CD8-positive, alpha-beta T cell (primary cell): ENCODE measurements at regions of chr7 and their contacts with region 1.

Region 1: DNA sequence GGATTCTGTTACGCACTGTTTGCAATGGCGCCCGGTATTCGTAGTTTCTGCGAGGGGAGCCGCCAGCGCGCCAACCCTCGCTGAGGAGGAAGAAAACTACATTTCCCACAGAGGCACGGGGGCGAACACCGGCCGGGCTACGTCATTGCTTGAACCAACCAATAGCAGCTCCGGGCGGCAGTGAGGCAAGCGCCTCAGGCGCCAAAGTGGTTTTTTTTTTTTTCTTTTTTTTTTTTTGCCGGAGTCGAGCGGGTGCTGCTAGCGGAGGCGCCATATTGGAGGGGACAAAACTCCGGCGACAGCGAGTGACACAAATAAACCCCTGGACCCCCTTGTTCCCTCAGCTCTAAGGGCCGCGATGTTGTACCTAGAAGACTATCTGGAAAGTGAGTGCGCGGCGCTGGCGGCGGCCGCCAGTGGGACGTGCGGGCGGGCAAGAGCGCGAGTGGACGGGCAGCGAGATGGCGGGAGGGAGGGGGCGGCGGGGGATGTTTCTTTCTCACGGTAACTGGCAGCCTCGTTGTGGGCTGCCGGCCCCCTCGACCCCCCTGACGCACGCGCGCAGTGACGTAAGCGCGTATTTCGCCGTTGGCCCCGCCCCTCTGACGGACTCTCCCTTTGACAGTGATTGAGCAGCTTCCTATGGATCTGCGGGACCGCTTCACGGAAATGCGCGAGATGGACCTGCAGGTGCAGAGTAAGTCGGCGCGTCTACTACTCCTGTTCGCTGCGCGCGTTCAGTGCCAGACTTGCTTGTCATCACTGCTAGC is at the start of gene ING3:
- DNase-seq: peak; percentile 97 to 99 (median 98)
- ATAC-seq: peak; percentile 85
- H3K4me3 ChIP-seq: peak within 1 kb of the TSS; percentile 63 to 93
- H3K4me3 Mint-ChIP-seq: peak within 1 kb of the TSS; percentile 98
- H3K27ac ChIP-seq: peak within 1 kb of the TSS; percentile 96 to 98
- H3K27ac Mint-ChIP-seq: peak within 1 kb of the TSS; percentile 98
- H3K4me1 ChIP-seq: peaks cover 12% of the 10 kb centered on the region
- H3K4me1 Mint-ChIP-seq: peaks cover 34% of the 10 kb centered on the region
- H3K27me3 ChIP-seq: no peaks in the 10 kb centered on the region
- H3K27me3 Mint-ChIP-seq: peaks cover 22% of the 10 kb centered on the region
- CTCF ChIP-seq: no peak
- total RNA-seq, gene ING3: 51.3 to 53.7 TPM

Region 2: GRCh38 chr7:120966961-120967360 is 16.2 kb after region 1 on chr7:
- CTCF ChIA-PET with region 1: no interaction called
- POLR2A ChIA-PET with region 1: interaction called, 3 read pairs
- intact Hi-C with region 1: loop called in 1 of 2 experiments (anchors 1 kb)
- DNase-seq: no peak
- ATAC-seq: no peak
- H3K4me3 ChIP-seq: no peak overlapping the region
- H3K4me3 Mint-ChIP-seq: no peak overlapping the region
- H3K27ac ChIP-seq: no peak overlapping the region
- H3K27ac Mint-ChIP-seq: no peak overlapping the region
- H3K4me1 ChIP-seq: no peaks in the 10 kb centered on the region
- H3K4me1 Mint-ChIP-seq: peaks cover 7% of the 10 kb centered on the region
- H3K27me3 ChIP-seq: no peaks in the 10 kb centered on the region
- H3K27me3 Mint-ChIP-seq: no peaks in the 10 kb centered on the region
- CTCF ChIP-seq: no peak

Region 3: DNA sequence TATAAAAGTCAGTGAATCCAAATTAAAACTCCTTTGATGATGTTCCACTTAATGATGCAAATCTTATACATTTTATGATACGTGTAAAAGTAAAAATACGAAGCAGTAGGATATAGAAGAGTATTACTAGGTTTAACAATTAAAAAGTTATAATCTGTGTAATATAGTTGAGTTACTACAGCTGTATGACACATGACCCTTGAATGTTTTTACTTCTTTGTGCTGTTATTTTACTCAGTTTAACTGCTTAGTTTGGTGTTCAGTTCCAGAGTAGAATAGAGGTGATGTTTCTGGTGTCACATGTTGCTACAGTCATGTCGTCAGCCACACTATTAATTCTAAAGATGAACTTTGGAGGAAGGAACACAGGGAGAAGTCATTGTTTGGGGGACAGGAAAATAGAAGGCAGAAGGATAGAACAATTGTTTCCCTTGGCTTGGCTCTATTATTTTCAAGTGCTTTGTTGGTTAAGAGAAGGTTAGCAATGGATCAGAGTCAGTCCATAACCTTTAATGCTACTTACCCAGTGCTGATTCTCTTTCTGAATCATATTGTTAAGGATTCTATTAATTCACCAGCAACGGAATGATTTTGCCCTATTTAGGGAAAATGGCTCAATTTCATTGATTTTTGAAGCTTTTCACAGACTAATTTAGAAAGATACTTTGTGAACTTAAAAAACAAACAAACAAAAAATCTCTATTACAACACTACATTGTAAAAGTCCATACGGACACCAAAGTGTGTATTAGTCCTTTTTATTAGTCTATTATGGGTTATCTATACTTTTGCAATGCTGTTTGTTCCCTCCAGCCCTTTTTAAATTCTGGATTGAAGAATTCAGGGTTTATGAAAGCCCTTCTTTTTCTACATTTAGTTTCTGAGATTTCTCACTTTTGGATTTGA is 111.2 kb after region 1 on chr7:
- CTCF ChIA-PET with region 1: no interaction called
- POLR2A ChIA-PET with region 1: no interaction called
- intact Hi-C with region 1: no loop called
- DNase-seq: no peak
- ATAC-seq: no peak
- H3K4me3 ChIP-seq: no peak overlapping the region
- H3K4me3 Mint-ChIP-seq: no peak overlapping the region
- H3K27ac ChIP-seq: no peak overlapping the region
- H3K27ac Mint-ChIP-seq: no peak overlapping the region
- H3K4me1 ChIP-seq: no peaks in the 10 kb centered on the region
- H3K4me1 Mint-ChIP-seq: no peaks in the 10 kb centered on the region
- H3K27me3 ChIP-seq: no peaks in the 10 kb centered on the region
- H3K27me3 Mint-ChIP-seq: peaks cover 2% of the 10 kb centered on the region
- CTCF ChIP-seq: no peak